Activated T-helper 1 cell treated with anti-CD3 and anti-CD28 coated beads, Interleukin-12 subunit alpha, Interleukin-12 subunit beta, Interleukin-2, Interleukin-4 antibody, amounts not matched to agents 30 ng/mL and 10 ng/mL and 1 ng/mL, durations not matched to agents 14 hours and 24 hours and 36 hours (primary cell): ENCODE measurements at regions of chr10 and their contacts with region 1.

Region 1: GRCh38 chr10:3811291-3811870 is 26.4 kb upstream of the KLF6 start:
- DNase-seq: peak; percentile 61
- H3K4me3 Mint-ChIP-seq: peak overlapping the region; percentile 60
- H3K27ac Mint-ChIP-seq: peak overlapping the region; percentile 99
- H3K4me1 Mint-ChIP-seq: peaks cover 85% of the 10 kb centered on the region
- H3K27me3 Mint-ChIP-seq: no peaks in the 10 kb centered on the region

Region 2: GRCh38 chr10:3785257-3785850 is 26.0 kb before region 1 on chr10:
- intact Hi-C with region 1: loop called (anchors 1 kb)
- DNase-seq: peak; percentile 99
- H3K4me3 Mint-ChIP-seq: peak overlapping the region; percentile 93
- H3K27ac Mint-ChIP-seq: peak overlapping the region; percentile 96
- H3K4me1 Mint-ChIP-seq: peaks cover 49% of the 10 kb centered on the region
- H3K27me3 Mint-ChIP-seq: no peaks in the 10 kb centered on the region

Region 3: DNA sequence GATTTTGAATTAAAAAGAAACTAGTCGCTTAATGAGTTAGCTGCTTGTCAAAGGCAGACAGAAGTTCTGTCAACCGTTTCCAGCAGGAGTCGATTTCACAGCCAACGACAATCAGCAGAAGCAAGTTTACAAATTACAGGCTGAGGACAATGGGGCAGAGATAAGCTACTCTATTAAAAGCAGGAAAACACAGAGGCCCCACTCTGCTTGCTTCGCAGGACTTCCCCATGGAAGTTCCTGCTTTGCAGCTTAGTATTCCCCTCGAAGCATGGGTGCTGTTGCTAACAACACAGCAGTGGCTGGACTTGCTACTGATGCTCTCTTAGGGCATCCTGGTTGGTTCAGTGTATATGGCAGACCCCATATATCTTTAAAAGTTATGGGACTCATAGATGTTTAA is 24.4 kb after region 1 on chr10:
- intact Hi-C with region 1: loop called (anchors 1 kb)
- DNase-seq: no peak
- H3K4me3 Mint-ChIP-seq: no peak overlapping the region
- H3K27ac Mint-ChIP-seq: peak overlapping the region; percentile 83
- H3K4me1 Mint-ChIP-seq: peaks cover 36% of the 10 kb centered on the region
- H3K27me3 Mint-ChIP-seq: no peaks in the 10 kb centered on the region

Region 4: GRCh38 chr10:3873728-3874461 is 62.5 kb after region 1 on chr10:
- intact Hi-C with region 1: loop called (anchors 1 kb)
- DNase-seq: no peak
- H3K4me3 Mint-ChIP-seq: peak overlapping the region; percentile 62
- H3K27ac Mint-ChIP-seq: peak overlapping the region; percentile 97
- H3K4me1 Mint-ChIP-seq: peaks cover 69% of the 10 kb centered on the region
- H3K27me3 Mint-ChIP-seq: no peaks in the 10 kb centered on the region

Region 5: DNA sequence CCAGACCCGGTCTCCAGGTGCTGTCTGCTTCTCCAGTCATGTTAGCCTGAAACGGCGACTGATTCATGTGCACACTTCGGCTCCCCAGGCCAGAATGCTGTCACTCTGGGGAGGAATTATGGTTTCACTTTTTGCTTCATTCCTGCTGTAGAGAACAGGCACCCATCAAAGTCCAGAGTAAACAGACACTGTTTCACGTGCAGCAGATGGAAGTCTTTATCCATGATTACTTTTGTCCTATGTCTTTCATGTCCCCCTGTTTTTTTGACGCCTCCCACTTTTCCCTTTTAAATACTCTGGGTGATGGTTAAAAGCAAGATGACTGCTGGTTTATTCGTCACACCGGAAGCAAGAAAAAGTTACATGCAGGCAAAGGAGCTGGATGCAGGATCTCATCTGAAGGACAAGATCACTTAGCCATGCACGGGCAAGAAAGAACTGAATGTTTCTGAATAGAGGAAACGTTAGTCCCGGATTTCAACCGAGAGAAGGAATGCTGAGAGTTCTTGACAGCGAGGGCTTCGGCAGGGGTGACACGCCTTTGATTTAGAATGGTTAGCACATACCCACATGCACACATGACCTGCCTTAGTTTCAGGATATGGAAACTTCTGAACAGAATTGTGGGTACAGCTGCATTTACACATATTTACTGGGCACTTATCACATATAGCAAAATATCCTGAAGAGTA is 223.7 kb after region 1 on chr10:
- intact Hi-C with region 1: loop called (anchors 2 kb)
- DNase-seq: peak; percentile 11
- H3K4me3 Mint-ChIP-seq: peak overlapping the region; percentile 61
- H3K27ac Mint-ChIP-seq: peak overlapping the region; percentile 66
- H3K4me1 Mint-ChIP-seq: peaks cover 36% of the 10 kb centered on the region
- H3K27me3 Mint-ChIP-seq: no peaks in the 10 kb centered on the region